Activated CD8-positive, alpha-beta memory T cell treated with anti-CD3 and anti-CD28 coated beads, Interleukin-2, amount 10 ng/mL, durations not matched to agents 7 days and 5 days (primary cell): ENCODE measurements at regions of chr17 and their contacts with region 1.

Region 1: GRCh38 chr17:4420692-4421131 is 13.0 kb upstream of the SPNS3 start:
- DNase-seq: peak; percentile 82
- ATAC-seq: peak; percentile 97
- H3K4me3 Mint-ChIP-seq: no peak overlapping the region
- H3K27ac Mint-ChIP-seq: no peak overlapping the region
- H3K4me1 Mint-ChIP-seq: peaks cover 9% of the 10 kb centered on the region
- H3K27me3 Mint-ChIP-seq: no peaks in the 10 kb centered on the region

Region 2: GRCh38 chr17:4394208-4395110 is 26.3 kb before region 1 on chr17:
- CTCF ChIA-PET with region 1: no interaction called
- DNase-seq: no peak
- ATAC-seq: no peak
- H3K4me3 Mint-ChIP-seq: no peak overlapping the region
- H3K27ac Mint-ChIP-seq: peak overlapping the region; percentile 29
- H3K4me1 Mint-ChIP-seq: peaks cover 38% of the 10 kb centered on the region
- H3K27me3 Mint-ChIP-seq: no peaks in the 10 kb centered on the region

Region 3: DNA sequence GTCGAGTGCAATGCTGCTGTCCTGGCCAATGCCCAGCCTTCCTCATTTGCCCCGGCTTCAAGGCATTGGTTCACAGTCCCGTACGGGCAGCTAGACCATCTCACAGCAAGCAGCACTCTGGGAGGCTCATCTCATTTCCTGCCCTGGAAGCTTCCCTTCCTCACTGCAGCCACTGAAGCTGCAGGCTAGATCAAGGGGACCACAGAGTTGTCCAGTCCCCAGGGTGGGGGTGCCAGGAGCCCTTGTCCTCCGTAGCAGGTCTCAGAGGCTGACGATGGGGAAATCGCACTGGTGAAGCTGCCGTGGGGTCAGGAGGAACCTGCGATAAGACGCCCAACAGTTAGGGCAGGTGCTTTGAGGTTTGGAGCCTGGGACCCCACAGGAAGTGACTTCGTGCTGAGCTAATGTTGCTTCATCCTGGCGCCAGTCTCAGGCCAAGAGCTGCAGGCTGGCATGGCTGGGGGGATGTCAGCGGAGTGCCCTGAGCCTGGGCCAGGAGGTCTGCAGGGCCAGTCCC is 12.9 kb after region 1 on chr17 and contains the start of gene SPNS3:
- CTCF ChIA-PET with region 1: interaction called, 34 read pairs
- DNase-seq: peak; percentile 85
- ATAC-seq: peak; percentile 81
- H3K4me3 Mint-ChIP-seq: peak within 1 kb of the TSS; percentile 73
- H3K27ac Mint-ChIP-seq: peak within 1 kb of the TSS; percentile 91
- H3K4me1 Mint-ChIP-seq: peaks cover 43% of the 10 kb centered on the region
- H3K27me3 Mint-ChIP-seq: no peaks in the 10 kb centered on the region
- total RNA-seq, gene SPNS3: 17.6 to 39.1 TPM

Region 4: DNA sequence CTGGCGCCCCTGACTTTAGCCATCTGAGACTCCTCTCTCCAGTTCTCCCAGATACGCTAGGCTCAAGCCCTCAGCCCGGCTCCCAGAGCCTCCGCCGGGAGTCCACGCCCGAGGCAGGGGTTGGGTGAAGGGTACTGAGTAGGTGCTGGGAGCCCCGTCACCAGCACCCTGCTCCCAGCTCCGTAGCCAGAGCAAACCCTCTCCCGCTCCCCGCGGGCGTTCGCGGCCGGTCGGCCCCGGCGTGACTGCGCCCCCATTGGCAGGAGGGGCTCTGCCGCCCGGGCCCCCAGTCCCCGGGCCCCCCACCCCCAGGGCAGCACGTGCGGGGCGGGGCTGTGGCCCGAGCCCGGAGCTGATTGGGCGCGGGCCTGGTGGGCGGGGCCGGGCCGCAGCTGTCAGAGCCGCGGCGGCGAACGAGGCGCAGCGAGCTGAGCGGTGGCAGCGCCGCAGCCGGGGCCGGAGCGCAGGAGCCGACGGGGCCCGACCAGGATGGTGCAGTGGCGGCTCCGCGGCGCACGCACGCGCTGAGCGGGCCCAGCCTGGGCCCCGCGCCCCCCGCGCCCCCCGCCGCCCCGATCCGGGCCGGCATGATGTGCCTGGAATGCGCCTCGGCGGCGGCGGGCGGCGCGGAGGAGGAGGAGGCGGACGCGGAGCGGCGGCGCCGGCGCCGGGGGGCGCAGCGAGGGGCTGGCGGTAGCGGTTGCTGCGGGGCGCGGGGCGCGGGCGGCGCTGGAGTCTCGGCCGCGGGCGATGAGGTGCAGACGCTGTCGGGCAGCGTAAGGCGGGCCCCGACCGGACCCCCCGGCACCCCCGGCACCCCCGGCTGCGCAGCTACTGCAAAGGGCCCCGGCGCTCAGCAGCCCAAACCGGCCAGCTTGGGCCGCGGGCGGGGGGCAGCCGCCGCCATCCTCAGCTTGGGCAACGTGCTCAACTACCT is 78.0 kb after region 1 on chr17 and contains the start of gene SPNS2:
- CTCF ChIA-PET with region 1: interaction called, 22 read pairs
- DNase-seq: peak; percentile 65
- ATAC-seq: peak; percentile 86
- H3K4me3 Mint-ChIP-seq: peak within 1 kb of the TSS; percentile 63
- H3K27ac Mint-ChIP-seq: no peak within 1 kb of the TSS
- H3K4me1 Mint-ChIP-seq: peaks cover 27% of the 10 kb centered on the region
- H3K27me3 Mint-ChIP-seq: peaks cover 47% of the 10 kb centered on the region
- total RNA-seq, gene SPNS2: 1.1 to 1.9 TPM

Region 5: GRCh38 chr17:4540224-4540641 is 119.5 kb after region 1 on chr17:
- CTCF ChIA-PET with region 1: interaction called, 23 read pairs
- DNase-seq: no peak
- ATAC-seq: no peak
- H3K4me3 Mint-ChIP-seq: no peak overlapping the region
- H3K27ac Mint-ChIP-seq: no peak overlapping the region
- H3K4me1 Mint-ChIP-seq: no peaks in the 10 kb centered on the region
- H3K27me3 Mint-ChIP-seq: no peaks in the 10 kb centered on the region

Region 6: GRCh38 chr17:4625181-4625617 is 204.5 kb after region 1 on chr17:
- CTCF ChIA-PET with region 1: interaction called, 19 read pairs
- DNase-seq: no peak
- ATAC-seq: no peak
- H3K4me3 Mint-ChIP-seq: no peak overlapping the region
- H3K27ac Mint-ChIP-seq: no peak overlapping the region
- H3K4me1 Mint-ChIP-seq: peaks cover 2% of the 10 kb centered on the region
- H3K27me3 Mint-ChIP-seq: peaks cover 34% of the 10 kb centered on the region